Activated T-helper 1 cell treated with anti-CD3 and anti-CD28 coated beads, Interleukin-12 subunit alpha, Interleukin-12 subunit beta, Interleukin-2, Interleukin-4 antibody, amounts not matched to agents 30 ng/mL and 10 ng/mL and 1 ng/mL, durations not matched to agents 14 hours and 24 hours and 36 hours (primary cell): ENCODE measurements at regions of chrX and their contacts with region 1.

Region 1: GRCh38 chrX:1537035-1537715 is at the start of gene P2RY8:
- DNase-seq: peak; percentile 74
- H3K4me3 Mint-ChIP-seq: peak within 1 kb of the TSS; percentile 89
- H3K27ac Mint-ChIP-seq: peak within 1 kb of the TSS; percentile 99
- H3K4me1 Mint-ChIP-seq: peaks cover 16% of the 10 kb centered on the region
- H3K27me3 Mint-ChIP-seq: no peaks in the 10 kb centered on the region
- total RNA-seq, gene P2RY8: 20.4 and 21.8 TPM in 2 replicates

Region 2: GRCh38 chrX:1246816-1247215 is 290.4 kb before region 1 on chrX:
- intact Hi-C with region 1: loop called (anchors 2 kb)
- DNase-seq: peak; percentile 77
- H3K4me3 Mint-ChIP-seq: peak overlapping the region; percentile 64
- H3K27ac Mint-ChIP-seq: peak overlapping the region; percentile 78
- H3K4me1 Mint-ChIP-seq: peaks cover 42% of the 10 kb centered on the region
- H3K27me3 Mint-ChIP-seq: peaks cover 4% of the 10 kb centered on the region

Region 3: GRCh38 chrX:1462596-1463251 is 74.5 kb before region 1 on chrX:
- intact Hi-C with region 1: loop called (anchors 1 kb)
- DNase-seq: peak; percentile 79
- H3K4me3 Mint-ChIP-seq: peak overlapping the region; percentile 77
- H3K27ac Mint-ChIP-seq: peak overlapping the region; percentile 90
- H3K4me1 Mint-ChIP-seq: peaks cover 58% of the 10 kb centered on the region
- H3K27me3 Mint-ChIP-seq: no peaks in the 10 kb centered on the region

Region 4: GRCh38 chrX:1507511-1508463 is 29.4 kb before region 1 on chrX:
- intact Hi-C with region 1: loop called (anchors 2 kb)
- DNase-seq: no peak
- H3K4me3 Mint-ChIP-seq: no peak overlapping the region
- H3K27ac Mint-ChIP-seq: peak overlapping the region; percentile 59
- H3K4me1 Mint-ChIP-seq: peaks cover 12% of the 10 kb centered on the region
- H3K27me3 Mint-ChIP-seq: no peaks in the 10 kb centered on the region

Region 5: DNA sequence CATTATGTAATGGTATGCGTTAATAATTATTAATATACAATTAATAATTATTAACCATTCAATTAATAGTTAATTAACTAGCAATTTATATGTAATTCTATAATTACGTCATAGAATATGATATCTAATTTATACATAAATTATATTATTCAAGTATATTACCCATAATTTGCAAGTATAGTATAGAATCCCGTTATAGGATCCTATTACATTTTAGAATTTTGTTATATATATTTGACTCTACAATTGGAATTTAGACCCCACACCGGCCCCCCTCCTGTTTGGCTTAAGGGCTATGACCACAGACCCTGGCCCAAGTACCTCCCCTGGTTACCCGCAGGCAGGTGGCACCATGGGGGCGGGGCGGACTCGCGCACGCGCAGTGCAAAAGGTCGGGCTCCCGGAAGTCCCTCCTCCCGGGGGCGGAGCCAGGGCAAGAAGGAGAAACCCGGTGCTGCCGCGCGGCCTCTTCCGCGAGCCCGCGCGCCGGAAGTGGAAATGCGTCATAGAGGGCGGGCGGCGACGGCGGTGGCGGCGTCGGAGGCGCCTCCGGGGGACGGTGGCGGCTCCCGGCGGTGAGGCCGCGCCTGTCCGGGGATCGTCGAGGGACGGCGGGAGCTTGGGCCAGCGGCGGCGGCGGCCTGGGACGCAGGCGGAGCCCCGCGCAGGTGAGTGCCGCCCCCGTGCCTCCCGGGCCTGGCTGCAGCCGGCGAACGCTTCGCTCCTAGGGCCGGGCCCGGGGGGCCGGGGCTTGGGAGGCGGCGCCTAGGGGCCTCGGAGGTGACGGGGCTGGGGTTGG is 54.1 kb after region 1 on chrX and contains the start of gene AKAP17A:
- intact Hi-C with region 1: loop called (anchors 1 kb)
- DNase-seq: peak; percentile 99
- H3K4me3 Mint-ChIP-seq: peak within 1 kb of the TSS; percentile 95
- H3K27ac Mint-ChIP-seq: peak within 1 kb of the TSS; percentile 93
- H3K4me1 Mint-ChIP-seq: peaks cover 10% of the 10 kb centered on the region
- H3K27me3 Mint-ChIP-seq: no peaks in the 10 kb centered on the region
- total RNA-seq, gene AKAP17A: 63.9 and 66.1 TPM in 2 replicates

Region 6: GRCh38 chrX:2707334-2707760 is 1170.2 kb after region 1 on chrX:
- intact Hi-C with region 1: loop called (anchors 5 kb)
- DNase-seq: peak; percentile 59
- H3K4me3 Mint-ChIP-seq: peak overlapping the region; percentile 68
- H3K27ac Mint-ChIP-seq: peak overlapping the region; percentile 88
- H3K4me1 Mint-ChIP-seq: peaks cover 73% of the 10 kb centered on the region
- H3K27me3 Mint-ChIP-seq: no peaks in the 10 kb centered on the region